ENCODE measurements at regions of chr9 and their contacts with region 1.

Region 1: DNA sequence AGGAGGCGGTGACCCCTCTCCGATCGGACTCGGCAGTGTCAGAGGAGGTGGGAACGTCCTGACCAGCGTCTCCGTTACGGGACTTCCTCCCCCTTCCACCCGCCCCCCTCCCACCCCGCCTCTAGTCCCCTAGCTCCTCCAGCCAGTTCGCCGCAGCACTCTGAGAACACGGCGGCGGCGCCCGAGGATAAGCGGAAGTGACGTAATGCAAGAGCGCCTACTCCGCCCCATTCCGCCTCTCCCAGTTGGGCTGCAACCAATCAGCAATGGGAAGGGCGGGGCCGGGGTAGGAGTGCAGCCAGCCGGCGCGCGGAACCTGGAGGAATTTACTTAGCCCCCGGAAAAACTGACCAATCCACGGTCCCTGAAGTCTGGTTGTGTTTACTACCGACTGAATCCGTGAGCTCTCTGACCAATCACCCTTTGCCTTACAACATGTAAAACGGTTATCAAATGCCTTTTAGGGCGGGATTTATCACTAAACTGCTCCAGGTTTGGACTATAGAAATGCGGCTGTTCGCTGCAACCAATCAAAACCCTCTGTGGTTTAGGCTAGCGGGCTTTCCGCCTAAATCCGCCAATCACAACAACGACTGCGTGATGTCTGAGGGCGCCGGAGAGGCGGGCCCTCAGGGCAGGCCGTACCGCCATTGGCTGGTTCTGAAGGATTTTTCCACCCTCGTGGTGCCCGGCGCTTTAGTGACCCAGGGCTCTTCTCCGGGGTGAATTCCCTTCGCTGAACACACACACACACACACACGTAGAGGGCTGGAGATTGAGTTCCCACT is at the start of gene ZBTB5:
- DNase-seq: peak; percentile 98
- H3K4me3 Mint-ChIP-seq: peak within 1 kb of the TSS; percentile 97
- H3K27ac Mint-ChIP-seq: peak within 1 kb of the TSS; percentile 95
- H3K4me1 Mint-ChIP-seq: peaks cover 47% of the 10 kb centered on the region
- H3K27me3 Mint-ChIP-seq: no peaks in the 10 kb centered on the region
- total RNA-seq, gene ZBTB5: 9.6 and 11.2 TPM in 2 replicates

Region 2: GRCh38 chr9:36487482-36488388 is 977.7 kb before region 1 on chr9:
- intact Hi-C with region 1: loop called (anchors 2 kb)
- DNase-seq: peak; percentile 91
- H3K4me3 Mint-ChIP-seq: peak overlapping the region; percentile 87
- H3K27ac Mint-ChIP-seq: peak overlapping the region; percentile 87
- H3K4me1 Mint-ChIP-seq: peaks cover 53% of the 10 kb centered on the region
- H3K27me3 Mint-ChIP-seq: no peaks in the 10 kb centered on the region

Region 3: GRCh38 chr9:37079370-37080164 is 385.9 kb before region 1 on chr9:
- intact Hi-C with region 1: loop called (anchors 1 kb)
- DNase-seq: peak; percentile 92
- H3K4me3 Mint-ChIP-seq: peak overlapping the region; percentile 95
- H3K27ac Mint-ChIP-seq: peak overlapping the region; percentile 97
- H3K4me1 Mint-ChIP-seq: peaks cover 44% of the 10 kb centered on the region
- H3K27me3 Mint-ChIP-seq: peaks cover 2% of the 10 kb centered on the region

Region 4: GRCh38 chr9:37415011-37415719 is 50.3 kb before region 1 on chr9:
- intact Hi-C with region 1: loop called (anchors 5 kb)
- DNase-seq: peak; percentile 69
- H3K4me3 Mint-ChIP-seq: peak overlapping the region; percentile 23
- H3K27ac Mint-ChIP-seq: no peak overlapping the region
- H3K4me1 Mint-ChIP-seq: peaks cover 12% of the 10 kb centered on the region
- H3K27me3 Mint-ChIP-seq: peaks cover 4% of the 10 kb centered on the region

Region 5: GRCh38 chr9:37592108-37592951 is 126.9 kb after region 1 on chr9 and contains the start of gene TOMM5:
- intact Hi-C with region 1: loop called (anchors 1 kb)
- DNase-seq: peak; percentile 89
- H3K4me3 Mint-ChIP-seq: peak within 1 kb of the TSS; percentile 94
- H3K27ac Mint-ChIP-seq: peak within 1 kb of the TSS; percentile 96
- H3K4me1 Mint-ChIP-seq: peaks cover 29% of the 10 kb centered on the region
- H3K27me3 Mint-ChIP-seq: peaks cover 8% of the 10 kb centered on the region
- total RNA-seq, gene TOMM5: 174 and 175 TPM in 2 replicates